A549 (cell line): ENCODE measurements at regions of chr3 and their contacts with region 1.

Region 1: GRCh38 chr3:43503067-43503728 is 118.6 kb downstream of the ANO10 start:
- DNase-seq: peak in 1 of 2 experiments; percentile 13
- ATAC-seq: peak in 1 of 2 experiments; percentile 68; a peak in 3 of 6 replicates
- H3K4me3 ChIP-seq: no peak overlapping the region
- H3K27ac ChIP-seq: no peak overlapping the region
- H3K4me1 ChIP-seq: peaks cover 1% of the 10 kb centered on the region; the same call in 2 of the 3 replicates
- CTCF ChIP-seq: peak; percentile 58
- EP300 ChIP-seq: no peak
- POLR2A ChIP-seq: no peak
- RAD21 ChIP-seq: peak; percentile 46 to 57; a peak in 4 of 5 replicates

Region 2: GRCh38 chr3:43162230-43163084 is 340.7 kb before region 1 on chr3:
- CTCF ChIA-PET with region 1: interaction called, 11 read pairs
- POLR2A ChIA-PET with region 1: no interaction called
- DNase-seq: peak in 1 of 2 experiments; percentile 31
- ATAC-seq: peak in 1 of 2 experiments; percentile 55; a peak in 3 of 6 replicates
- H3K4me3 ChIP-seq: no peak overlapping the region
- H3K27ac ChIP-seq: no peak overlapping the region
- H3K4me1 ChIP-seq: no peaks in the 10 kb centered on the region
- CTCF ChIP-seq: no peak; the same call in 2 of the 3 replicates
- EP300 ChIP-seq: no peak
- POLR2A ChIP-seq: no peak
- RAD21 ChIP-seq: peak; percentile 34 to 44; a peak in 3 of 5 replicates